ENCODE measurements at regions of chr1 and their contacts with region 1.

Region 1: GRCh38 chr1:24201941-24202440 is 14.9 kb upstream of the IFNLR1 start:
- DNase-seq: peak; percentile 55
- H3K4me3 ChIP-seq: no peak overlapping the region
- H3K27me3 ChIP-seq: peaks cover 7% of the 10 kb centered on the region; the same call in 1 of the 2 replicates
- CTCF ChIP-seq: peak; percentile 78

Region 2: GRCh38 chr1:23867953-23868556 is 333.9 kb before region 1 on chr1 and contains the start of gene FUCA1:
- CTCF ChIA-PET with region 1: no interaction called
- POLR2A ChIA-PET with region 1: no interaction called
- DNase-seq: peak; percentile 42
- H3K4me3 ChIP-seq: peak within 1 kb of the TSS; percentile 69
- H3K27me3 ChIP-seq: peaks cover 4% of the 10 kb centered on the region
- CTCF ChIP-seq: peak; percentile 96
- polyA plus RNA-seq, gene FUCA1: 12.5 and 22.8 TPM in 2 replicates

Region 3: DNA sequence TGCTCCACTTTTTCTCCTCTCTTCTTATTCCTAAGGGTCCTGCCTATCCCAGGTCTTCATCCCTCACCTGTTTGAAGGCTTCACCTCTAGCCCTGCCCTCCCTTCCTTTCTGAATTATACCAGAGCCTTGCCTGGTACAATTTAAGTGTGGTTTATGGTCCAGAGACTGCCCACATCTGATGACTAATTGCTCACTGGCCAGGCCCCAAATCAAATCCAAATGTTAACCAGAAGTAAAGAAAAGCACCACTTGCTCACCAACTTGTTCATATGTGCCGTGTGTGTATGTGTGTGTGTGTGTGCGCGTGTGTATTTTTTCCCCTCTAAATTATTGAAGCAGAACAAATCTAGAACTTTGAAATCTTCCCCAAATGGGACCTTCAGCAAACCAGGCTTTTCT is 116.4 kb before region 1 on chr1:
- CTCF ChIA-PET with region 1: no interaction called
- POLR2A ChIA-PET with region 1: no interaction called
- DNase-seq: peak; percentile 14
- H3K4me3 ChIP-seq: no peak overlapping the region
- H3K27me3 ChIP-seq: peaks cover 13% of the 10 kb centered on the region
- CTCF ChIP-seq: no peak

Region 4: DNA sequence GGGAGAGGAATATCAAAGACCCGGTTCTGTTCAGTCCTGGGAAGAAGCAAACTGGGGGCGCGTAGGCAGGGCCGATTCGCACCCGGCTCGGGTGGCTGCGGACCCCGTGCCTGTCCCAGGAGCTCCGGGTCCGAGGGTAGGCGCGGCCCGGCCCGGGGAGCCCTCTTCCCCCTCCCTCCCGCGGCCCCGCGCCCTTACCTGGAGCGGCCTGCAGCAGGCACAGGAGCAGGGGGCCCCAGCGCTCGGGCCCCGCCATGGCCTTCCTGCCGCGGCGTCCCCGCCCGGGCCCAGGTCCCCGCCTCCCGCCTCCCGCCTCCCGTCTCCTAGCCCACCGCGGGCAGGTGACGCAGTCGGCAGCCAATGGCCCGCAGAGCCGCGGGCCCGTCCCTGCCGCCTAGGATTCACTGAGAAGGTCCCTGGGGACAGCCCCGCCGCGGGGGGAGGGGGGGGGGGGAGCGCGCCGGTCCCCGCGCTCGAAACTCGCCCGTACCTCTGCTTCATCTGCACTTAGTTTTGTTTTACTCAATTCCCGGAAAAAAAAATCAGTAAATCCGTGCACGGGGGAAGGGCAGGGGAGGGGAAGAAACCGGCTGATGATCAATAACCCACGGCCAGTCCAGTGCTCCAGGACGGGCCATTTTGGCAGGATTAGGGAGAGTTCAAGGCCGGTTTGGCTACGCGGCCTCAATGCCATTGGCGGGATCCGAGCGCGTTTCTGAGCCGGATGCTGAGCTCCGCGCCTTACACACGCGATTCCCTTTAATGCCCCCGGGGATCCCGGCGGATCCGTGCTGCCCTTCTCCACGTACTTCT is 14.8 kb before region 1 on chr1 and contains the start of gene IFNLR1:
- CTCF ChIA-PET with region 1: interaction called, 29 read pairs
- POLR2A ChIA-PET with region 1: no interaction called
- DNase-seq: no peak
- H3K4me3 ChIP-seq: peak within 1 kb of the TSS; percentile 30
- H3K27me3 ChIP-seq: peaks cover 6% of the 10 kb centered on the region; the same call in 1 of the 2 replicates
- CTCF ChIP-seq: no peak
- polyA plus RNA-seq, gene IFNLR1: not detected in 2 replicates

Region 5: GRCh38 chr1:24275510-24275909 is 73.5 kb after region 1 on chr1:
- CTCF ChIA-PET with region 1: no interaction called
- POLR2A ChIA-PET with region 1: no interaction called
- DNase-seq: no peak
- H3K4me3 ChIP-seq: no peak overlapping the region
- H3K27me3 ChIP-seq: peaks cover 22% of the 10 kb centered on the region
- CTCF ChIP-seq: no peak

Region 6: GRCh38 chr1:24308365-24309015 is 106.5 kb after region 1 on chr1:
- CTCF ChIA-PET with region 1: interaction called, 19 read pairs
- POLR2A ChIA-PET with region 1: no interaction called
- DNase-seq: no peak
- H3K4me3 ChIP-seq: no peak overlapping the region
- H3K27me3 ChIP-seq: peaks cover 22% of the 10 kb centered on the region
- CTCF ChIP-seq: peak; percentile 47

Region 7: DNA sequence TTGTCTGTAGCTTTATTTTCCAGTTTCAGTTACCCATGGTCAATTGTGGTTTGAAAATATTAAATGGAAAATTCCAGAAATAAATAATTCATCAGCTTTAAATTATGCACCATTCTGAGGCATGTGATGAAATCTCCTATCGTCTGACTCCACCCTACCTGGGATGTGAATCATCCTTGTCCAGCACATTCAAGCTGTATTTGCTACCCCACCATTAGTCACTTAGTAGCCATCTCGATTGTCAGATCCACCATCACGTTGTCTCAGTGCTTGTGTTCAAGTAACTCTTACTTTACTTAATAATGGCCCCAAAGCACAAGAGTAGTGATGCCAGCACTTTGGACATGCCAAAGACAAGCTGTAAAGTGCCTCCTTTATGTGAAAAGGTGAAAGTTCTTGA is 207.5 kb after region 1 on chr1:
- CTCF ChIA-PET with region 1: interaction called, 17 read pairs
- POLR2A ChIA-PET with region 1: no interaction called
- DNase-seq: peak; percentile 69
- H3K4me3 ChIP-seq: no peak overlapping the region
- H3K27me3 ChIP-seq: no peaks in the 10 kb centered on the region
- CTCF ChIP-seq: no peak

Region 8: GRCh38 chr1:24572312-24572711 is 370.3 kb after region 1 on chr1:
- CTCF ChIA-PET with region 1: no interaction called
- POLR2A ChIA-PET with region 1: no interaction called
- DNase-seq: no peak
- H3K4me3 ChIP-seq: no peak overlapping the region
- H3K27me3 ChIP-seq: no peaks in the 10 kb centered on the region
- CTCF ChIP-seq: no peak

Region 9: GRCh38 chr1:24586970-24587820 is 385.2 kb after region 1 on chr1:
- CTCF ChIA-PET with region 1: interaction called, 43 read pairs
- POLR2A ChIA-PET with region 1: no interaction called
- DNase-seq: no peak
- H3K4me3 ChIP-seq: no peak overlapping the region
- H3K27me3 ChIP-seq: peaks cover 8% of the 10 kb centered on the region
- CTCF ChIP-seq: peak; percentile 76

Region 10: DNA sequence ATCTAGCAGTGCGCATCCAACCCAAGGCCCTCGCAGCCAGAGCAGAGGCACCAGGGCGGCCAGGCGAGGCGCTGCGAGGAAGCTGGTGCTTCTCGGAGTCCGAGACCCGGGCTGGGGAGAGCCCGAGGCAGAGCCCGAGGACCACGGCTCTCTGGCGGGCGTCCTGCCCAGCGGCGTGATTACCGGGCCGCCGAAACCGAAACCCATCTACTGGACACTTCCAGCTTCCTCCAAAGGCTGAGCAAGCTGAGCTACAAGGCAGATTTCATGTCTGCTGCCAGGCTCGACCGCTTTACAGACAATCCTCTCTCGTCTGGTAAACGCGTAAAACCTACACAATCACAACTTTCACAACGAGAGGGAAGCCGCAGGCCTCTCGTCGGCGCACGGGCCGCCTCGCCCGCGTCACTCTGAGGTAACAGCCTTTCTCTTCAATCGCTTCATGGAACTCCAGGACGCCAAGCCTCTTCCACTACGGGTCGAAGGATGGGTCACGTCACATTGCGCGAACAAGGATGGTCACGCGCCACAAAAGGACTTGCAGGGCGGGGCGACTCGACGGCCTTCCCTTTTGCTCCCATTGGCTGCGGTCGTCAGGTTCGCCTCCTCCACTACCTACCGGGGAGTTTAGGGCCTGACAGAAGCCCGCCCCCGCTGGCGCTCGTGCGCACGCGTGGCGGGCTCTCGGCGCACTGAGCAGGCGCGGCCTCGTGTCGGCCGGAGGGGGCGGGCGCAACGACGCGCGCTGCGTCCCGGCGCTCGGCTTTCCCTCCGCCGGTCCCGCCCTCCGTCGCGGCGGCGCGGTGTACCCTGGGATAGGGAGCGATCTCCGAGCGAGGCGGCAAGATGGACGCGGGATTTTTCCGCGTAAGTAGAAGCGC is 440.7 kb after region 1 on chr1 and contains the start of gene SRRM1:
- CTCF ChIA-PET with region 1: interaction called, 80 read pairs
- POLR2A ChIA-PET with region 1: no interaction called
- DNase-seq: peak; percentile 100
- H3K4me3 ChIP-seq: peak within 1 kb of the TSS; percentile 97
- H3K27me3 ChIP-seq: no peaks in the 10 kb centered on the region
- CTCF ChIP-seq: peak; percentile 24
- polyA plus RNA-seq, gene SRRM1: 47.5 and 50.4 TPM in 2 replicates

Measured in BJ (cell line).